ENCODE measurements at regions of chr22 and their contacts with region 1.

Region 1: DNA sequence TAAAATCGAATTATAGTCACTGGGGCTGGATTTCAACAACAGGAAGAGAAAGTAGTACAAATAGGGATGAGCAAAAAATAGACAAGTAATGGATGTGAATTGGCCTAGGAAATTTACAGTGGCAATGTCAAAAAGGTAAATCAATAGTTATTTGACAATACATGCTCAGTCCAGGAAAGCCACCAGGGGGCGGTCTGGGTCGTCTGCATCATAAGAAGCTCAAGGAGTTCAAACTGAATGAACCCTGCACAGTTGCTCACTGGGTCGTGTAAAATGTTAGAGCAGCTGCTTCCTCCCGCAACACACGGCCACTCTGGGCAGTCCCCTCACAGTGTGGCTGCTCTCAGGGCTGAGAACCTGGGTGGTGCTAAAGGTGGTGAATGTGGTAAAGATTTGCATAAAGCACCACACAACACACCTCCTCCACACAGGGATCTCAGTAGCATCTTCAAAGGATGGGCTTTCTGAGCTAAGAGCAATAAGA is 85.9 kb downstream of the ZNF280B start:
- DNase-seq: peak; percentile 99
- H3K4me3 ChIP-seq: peak overlapping the region; percentile 41
- H3K27ac ChIP-seq: peak overlapping the region; percentile 49
- H3K4me1 ChIP-seq: peaks cover 63% of the 10 kb centered on the region
- CTCF ChIP-seq: peak; percentile 99

Region 2: DNA sequence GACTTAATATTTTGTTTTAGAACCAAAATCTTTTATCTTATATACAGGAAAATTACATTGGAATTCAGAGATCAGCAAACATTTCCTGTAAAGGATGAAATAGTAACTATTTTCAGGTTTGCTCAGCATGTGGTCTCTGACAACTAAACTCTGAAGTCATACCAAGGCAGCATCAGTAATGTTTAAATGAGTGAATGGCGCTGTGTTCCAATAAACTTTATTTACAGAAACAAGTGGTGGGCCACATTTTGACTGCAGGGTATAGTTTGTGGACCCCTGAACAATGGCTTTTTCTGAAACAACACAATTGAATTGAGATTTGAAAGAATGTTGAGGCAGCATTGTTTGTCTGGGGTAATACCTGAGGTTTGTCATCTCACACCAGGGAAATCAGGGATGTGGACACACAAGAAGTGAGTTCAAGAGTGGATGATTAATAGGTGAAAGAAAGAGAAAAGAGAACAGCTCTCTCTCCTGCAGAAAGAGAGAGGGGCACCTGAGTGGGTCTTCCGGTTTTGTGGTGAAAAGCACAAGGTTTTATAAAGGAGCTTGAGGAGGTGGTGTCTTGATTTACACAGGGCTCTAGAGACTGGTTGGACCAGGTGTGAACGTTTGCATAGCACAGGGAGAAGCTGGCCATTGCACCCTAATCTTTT is 291.6 kb before region 1 on chr22:
- CTCF ChIA-PET with region 1: no interaction called
- POLR2A ChIA-PET with region 1: no interaction called
- intact Hi-C with region 1: no loop called
- DNase-seq: peak; percentile 37
- H3K4me3 ChIP-seq: no peak overlapping the region
- H3K27ac ChIP-seq: no peak overlapping the region
- H3K4me1 ChIP-seq: peaks cover 13% of the 10 kb centered on the region
- CTCF ChIP-seq: no peak

Region 3: DNA sequence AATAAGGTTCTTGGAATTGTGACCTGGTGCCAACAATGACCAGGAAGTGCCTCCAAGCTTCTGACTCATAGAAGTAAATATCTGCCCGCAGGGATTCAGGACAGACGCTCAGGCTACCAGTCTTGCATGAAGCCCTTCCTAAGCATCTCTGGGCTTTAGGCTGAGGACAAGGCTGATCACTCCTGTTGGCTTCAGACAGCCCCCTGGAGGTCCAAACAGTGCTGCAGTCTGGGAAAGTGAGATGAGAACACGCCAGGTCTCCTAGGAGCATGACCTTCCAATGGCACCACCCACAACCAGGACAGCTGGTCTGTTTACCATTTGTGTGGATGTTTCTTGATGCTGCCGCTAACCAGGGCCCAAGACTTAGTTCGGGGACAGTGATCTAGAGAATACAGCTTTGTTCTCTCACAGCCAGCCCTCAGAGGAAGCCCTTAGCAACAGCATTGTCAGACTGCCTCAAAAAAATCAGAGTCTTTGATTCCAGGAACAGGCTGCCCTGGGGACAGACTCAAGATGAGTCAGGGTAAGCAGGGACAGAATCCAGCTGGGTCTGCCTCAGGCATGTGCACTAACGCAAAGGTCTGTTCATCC is 25.3 kb before region 1 on chr22:
- CTCF ChIA-PET with region 1: interaction called, 8 read pairs
- POLR2A ChIA-PET with region 1: interaction called, 10 read pairs
- intact Hi-C with region 1: no loop called
- DNase-seq: peak; percentile 34
- H3K4me3 ChIP-seq: no peak overlapping the region
- H3K27ac ChIP-seq: no peak overlapping the region
- H3K4me1 ChIP-seq: peaks cover 71% of the 10 kb centered on the region
- CTCF ChIP-seq: peak; percentile 54

Region 4: DNA sequence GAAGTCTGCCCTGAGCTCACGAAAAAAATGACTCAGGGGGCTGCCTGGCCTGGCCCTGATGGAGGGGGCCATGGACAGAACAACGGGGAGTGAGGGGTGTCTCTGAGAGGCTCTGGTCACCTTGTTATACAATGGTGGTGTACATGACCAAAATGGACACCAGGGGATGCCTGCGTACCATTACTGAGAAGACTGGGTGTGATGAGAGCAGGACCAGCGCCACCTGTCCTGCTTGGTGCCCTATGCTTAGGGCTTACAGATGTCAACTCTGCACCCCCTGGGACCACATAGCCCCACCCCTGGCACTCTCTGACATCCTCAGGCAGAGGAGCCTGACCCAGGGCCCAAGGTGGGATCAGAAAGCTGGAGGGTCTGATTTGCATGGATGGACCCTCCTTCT is 18.9 kb before region 1 on chr22:
- CTCF ChIA-PET with region 1: interaction called, 10 read pairs
- POLR2A ChIA-PET with region 1: interaction called, 5 read pairs
- intact Hi-C with region 1: no loop called
- DNase-seq: peak; percentile 80
- H3K4me3 ChIP-seq: no peak overlapping the region
- H3K27ac ChIP-seq: peak overlapping the region; percentile 79
- H3K4me1 ChIP-seq: peaks cover 82% of the 10 kb centered on the region
- CTCF ChIP-seq: peak; percentile 60

Region 5: GRCh38 chr22:22408731-22409696 is 13.7 kb before region 1 on chr22:
- CTCF ChIA-PET with region 1: interaction called, 10 read pairs
- POLR2A ChIA-PET with region 1: interaction called, 6 read pairs
- intact Hi-C with region 1: loop called (anchors 1 kb)
- DNase-seq: peak; percentile 87
- H3K4me3 ChIP-seq: no peak overlapping the region
- H3K27ac ChIP-seq: peak overlapping the region; percentile 59
- H3K4me1 ChIP-seq: peaks cover 64% of the 10 kb centered on the region
- CTCF ChIP-seq: peak; percentile 85

Measured in OCI-LY7 (cell line).